IMR-90 (cell line): ENCODE measurements at regions of chr12 and their contacts with region 1.

Region 1: DNA sequence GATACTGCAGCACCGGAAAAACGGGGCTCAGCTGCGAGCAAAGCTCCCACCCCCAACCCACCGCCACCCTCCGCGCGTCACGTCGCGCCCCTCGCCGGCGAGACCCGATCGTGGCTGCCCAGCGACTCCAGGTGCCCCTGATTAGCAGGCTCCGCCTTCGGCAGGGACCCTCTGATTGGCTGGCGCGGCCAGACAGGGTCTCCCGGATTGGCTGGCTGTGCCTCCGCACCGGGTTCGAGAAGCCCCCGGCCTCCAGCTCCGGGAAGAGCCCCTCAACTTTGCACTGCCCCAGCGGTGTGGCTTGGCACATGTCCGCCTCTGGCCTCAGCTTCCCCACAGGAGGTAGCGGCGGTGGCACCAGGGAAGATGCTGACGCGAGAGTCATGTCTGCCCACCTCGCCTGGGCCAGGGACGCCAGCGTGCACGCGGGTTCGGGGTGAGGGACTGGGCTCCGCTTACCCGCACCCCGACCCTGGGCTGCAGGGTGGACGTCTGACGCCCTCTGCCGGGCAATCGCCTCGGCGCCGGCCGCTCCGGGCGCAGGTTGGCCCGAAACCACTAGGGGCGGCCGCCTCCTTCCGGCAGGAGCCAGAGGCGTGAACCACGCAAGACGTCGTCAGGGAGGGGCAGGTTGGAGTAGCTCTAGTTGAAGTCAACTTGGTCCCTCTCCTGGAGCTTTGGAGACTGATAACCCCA is 498 bp upstream of the RHOF start:
- DNase-seq: peak; percentile 89
- ATAC-seq: peak; percentile 76
- H3K4me3 ChIP-seq: peak overlapping the region; percentile 48
- H3K27ac ChIP-seq: peak overlapping the region; percentile 28
- H3K4me1 ChIP-seq: peaks cover 26% of the 10 kb centered on the region
- H3K27me3 ChIP-seq: no peaks in the 10 kb centered on the region
- CTCF ChIP-seq: peak; percentile 100
- POLR2A ChIP-seq: peak; percentile 38
- RAD21 ChIP-seq: peak; percentile 95

Region 2: DNA sequence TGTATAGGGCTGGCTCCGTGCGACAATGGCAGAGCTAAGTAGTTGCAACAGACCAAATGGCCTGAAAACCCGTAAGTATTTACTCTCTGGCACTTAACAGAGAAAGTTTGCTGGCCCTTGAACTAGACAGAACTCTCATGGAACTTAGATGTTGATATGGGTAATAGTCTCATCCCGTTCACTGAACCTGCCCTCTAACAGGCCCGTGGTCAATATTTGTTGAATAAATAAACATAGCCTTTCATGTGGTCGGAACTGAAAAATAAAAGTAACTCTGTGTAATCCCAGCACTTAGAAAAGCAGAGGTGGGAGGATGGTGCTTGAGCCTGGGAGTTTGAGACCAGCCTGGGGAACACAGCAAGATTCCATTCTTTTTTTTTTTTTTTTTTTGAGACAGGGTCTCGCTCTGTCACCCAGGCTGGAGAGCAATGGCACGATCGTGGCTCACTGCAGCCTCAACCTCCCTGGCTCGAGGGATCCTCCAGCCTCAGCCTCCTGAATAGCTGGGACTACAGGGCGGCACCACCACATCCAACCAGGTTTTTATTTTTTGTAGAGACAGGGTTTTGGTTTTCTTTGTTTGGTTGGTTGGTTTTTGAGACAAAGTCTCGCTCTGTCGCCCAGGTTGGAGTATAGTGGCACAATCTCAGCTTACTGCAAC is 242.9 kb before region 1 on chr12:
- CTCF ChIA-PET with region 1: no interaction called
- POLR2A ChIA-PET with region 1: no interaction called
- dilution Hi-C with region 1: no loop called
- in situ Hi-C with region 1: no loop called
- intact Hi-C with region 1: loop called (anchors 10 kb)
- DNase-seq: no peak
- ATAC-seq: no peak
- H3K4me3 ChIP-seq: no peak overlapping the region
- H3K27ac ChIP-seq: no peak overlapping the region
- H3K4me1 ChIP-seq: no peaks in the 10 kb centered on the region
- H3K27me3 ChIP-seq: no peaks in the 10 kb centered on the region
- CTCF ChIP-seq: no peak
- POLR2A ChIP-seq: no peak
- RAD21 ChIP-seq: no peak

Region 3: DNA sequence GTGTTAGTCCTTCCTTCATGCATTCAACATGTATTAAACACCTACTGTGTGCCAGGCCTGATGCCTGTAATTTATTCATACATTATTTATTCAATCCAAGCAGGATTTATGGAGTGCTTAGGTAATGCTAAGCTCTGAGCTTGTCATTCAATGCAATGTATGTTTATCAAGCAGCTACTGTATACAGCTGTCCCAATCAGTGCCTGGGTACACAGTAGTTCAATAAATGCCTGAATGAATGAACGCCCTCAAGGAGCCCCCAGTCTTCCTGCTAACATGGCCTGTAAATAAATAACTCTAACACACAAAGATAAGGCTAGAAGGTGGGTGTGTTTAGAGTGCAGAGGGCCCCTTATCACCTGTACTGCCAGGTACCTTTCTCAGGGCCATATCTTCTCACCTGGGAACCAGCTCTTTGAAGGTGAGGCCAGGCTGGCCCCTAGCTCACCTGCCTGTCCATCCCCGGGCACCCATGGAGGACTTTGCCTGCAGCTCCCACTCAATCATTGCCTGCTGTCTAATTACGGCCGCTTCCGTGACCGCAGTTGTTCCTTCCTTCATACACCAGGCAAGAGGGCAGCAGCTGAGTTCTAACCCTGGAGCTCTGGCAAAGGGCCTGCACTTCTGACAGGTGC is 193.2 kb before region 1 on chr12:
- CTCF ChIA-PET with region 1: no interaction called
- POLR2A ChIA-PET with region 1: no interaction called
- dilution Hi-C with region 1: no loop called
- in situ Hi-C with region 1: no loop called
- intact Hi-C with region 1: no loop called
- DNase-seq: no peak
- ATAC-seq: no peak
- H3K4me3 ChIP-seq: no peak overlapping the region
- H3K27ac ChIP-seq: no peak overlapping the region
- H3K4me1 ChIP-seq: no peaks in the 10 kb centered on the region
- H3K27me3 ChIP-seq: no peaks in the 10 kb centered on the region
- CTCF ChIP-seq: no peak
- POLR2A ChIP-seq: no peak
- RAD21 ChIP-seq: no peak

Region 4: DNA sequence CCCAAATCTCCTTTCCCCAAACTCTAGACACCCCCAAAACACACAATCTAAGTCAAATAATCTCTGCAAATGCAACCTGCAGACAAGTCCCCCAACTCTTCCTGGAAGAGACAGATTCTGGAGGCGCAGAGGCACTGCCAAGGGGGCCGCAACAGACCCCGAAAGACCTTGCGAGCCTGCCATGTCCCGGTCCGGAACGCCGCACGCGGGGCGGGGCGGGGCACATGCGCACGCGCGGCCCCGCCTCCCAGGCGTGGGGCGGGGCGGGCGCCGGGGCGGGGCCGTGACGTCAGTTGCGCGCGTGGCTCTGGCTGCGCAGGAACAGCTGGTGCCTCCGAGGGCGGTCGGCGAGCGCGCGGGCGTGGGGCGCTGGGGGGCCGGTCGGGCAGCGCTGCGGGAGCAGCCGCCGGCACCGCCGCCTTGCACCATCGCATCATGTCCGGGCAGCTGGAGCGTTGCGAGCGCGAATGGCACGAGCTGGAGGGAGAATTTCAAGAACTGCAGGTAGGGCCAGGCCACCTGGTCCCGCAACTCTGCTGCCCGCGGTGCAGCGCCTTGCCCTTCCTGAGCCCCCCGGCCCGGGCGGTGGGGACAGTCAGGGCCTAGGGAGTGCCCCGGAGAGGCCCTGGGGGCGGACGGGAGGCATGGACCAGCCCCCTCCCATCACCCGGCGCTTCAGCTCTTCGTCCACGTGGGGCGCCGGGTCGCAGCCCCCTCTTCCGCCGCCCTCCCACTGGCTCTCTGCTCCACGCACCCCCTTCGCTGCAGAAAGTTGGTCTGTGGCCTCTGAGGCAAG is 81.3 kb before region 1 on chr12 and contains the start of gene TMEM120B:
- CTCF ChIA-PET with region 1: interaction called, 4 read pairs
- POLR2A ChIA-PET with region 1: no interaction called
- dilution Hi-C with region 1: no loop called
- in situ Hi-C with region 1: no loop called
- intact Hi-C with region 1: loop called (anchors 5 kb)
- DNase-seq: peak; percentile 71
- ATAC-seq: peak; percentile 90
- H3K4me3 ChIP-seq: peak within 1 kb of the TSS; percentile 75
- H3K27ac ChIP-seq: peak within 1 kb of the TSS; percentile 64
- H3K4me1 ChIP-seq: peaks cover 10% of the 10 kb centered on the region
- H3K27me3 ChIP-seq: no peaks in the 10 kb centered on the region
- CTCF ChIP-seq: no peak
- POLR2A ChIP-seq: peak; percentile 82
- RAD21 ChIP-seq: no peak
- total RNA-seq, gene TMEM120B: 9.2 and 10.6 TPM in 2 replicates

Region 5: GRCh38 chr12:121781998-121782979 is 11.7 kb before region 1 on chr12:
- CTCF ChIA-PET with region 1: interaction called, 20 read pairs
- POLR2A ChIA-PET with region 1: interaction called, 5 read pairs
- dilution Hi-C with region 1: no loop called
- in situ Hi-C with region 1: no loop called
- intact Hi-C with region 1: no loop called
- DNase-seq: peak; percentile 72
- ATAC-seq: peak; percentile 54
- H3K4me3 ChIP-seq: no peak overlapping the region
- H3K27ac ChIP-seq: peak overlapping the region; percentile 24
- H3K4me1 ChIP-seq: peaks cover 15% of the 10 kb centered on the region
- H3K27me3 ChIP-seq: no peaks in the 10 kb centered on the region
- CTCF ChIP-seq: no peak
- POLR2A ChIP-seq: no peak
- RAD21 ChIP-seq: no peak

Region 6: GRCh38 chr12:121888478-121889266 is 94.7 kb after region 1 on chr12 and contains the start of gene PSMD9:
- CTCF ChIA-PET with region 1: interaction called, 22 read pairs
- POLR2A ChIA-PET with region 1: no interaction called
- dilution Hi-C with region 1: no loop called
- in situ Hi-C with region 1: no loop called
- intact Hi-C with region 1: loop called (anchors 1 kb)
- DNase-seq: peak; percentile 97
- ATAC-seq: peak; percentile 98
- H3K4me3 ChIP-seq: peak within 1 kb of the TSS; percentile 79
- H3K27ac ChIP-seq: peak within 1 kb of the TSS; percentile 96
- H3K4me1 ChIP-seq: peaks cover 10% of the 10 kb centered on the region
- H3K27me3 ChIP-seq: no peaks in the 10 kb centered on the region
- CTCF ChIP-seq: peak; percentile 82
- POLR2A ChIP-seq: peak; percentile 92
- RAD21 ChIP-seq: peak; percentile 80
- total RNA-seq, gene PSMD9: 142 and 156 TPM in 2 replicates

Region 7: GRCh38 chr12:122021822-122022526 is 228.0 kb after region 1 on chr12 and contains the start of gene BCL7A:
- CTCF ChIA-PET with region 1: no interaction called
- POLR2A ChIA-PET with region 1: no interaction called
- dilution Hi-C with region 1: no loop called
- in situ Hi-C with region 1: no loop called
- intact Hi-C with region 1: loop called (anchors 5 kb)
- DNase-seq: peak; percentile 74
- ATAC-seq: peak; percentile 81
- H3K4me3 ChIP-seq: peak within 1 kb of the TSS; percentile 66
- H3K27ac ChIP-seq: peak within 1 kb of the TSS; percentile 67
- H3K4me1 ChIP-seq: peaks cover 13% of the 10 kb centered on the region
- H3K27me3 ChIP-seq: no peaks in the 10 kb centered on the region
- CTCF ChIP-seq: no peak
- POLR2A ChIP-seq: no peak
- RAD21 ChIP-seq: no peak
- total RNA-seq, gene BCL7A: 5.6 and 6.1 TPM in 2 replicates